AG04449 (cell line): ENCODE measurements at regions of chr18 and their contacts with region 1.

Region 1: DNA sequence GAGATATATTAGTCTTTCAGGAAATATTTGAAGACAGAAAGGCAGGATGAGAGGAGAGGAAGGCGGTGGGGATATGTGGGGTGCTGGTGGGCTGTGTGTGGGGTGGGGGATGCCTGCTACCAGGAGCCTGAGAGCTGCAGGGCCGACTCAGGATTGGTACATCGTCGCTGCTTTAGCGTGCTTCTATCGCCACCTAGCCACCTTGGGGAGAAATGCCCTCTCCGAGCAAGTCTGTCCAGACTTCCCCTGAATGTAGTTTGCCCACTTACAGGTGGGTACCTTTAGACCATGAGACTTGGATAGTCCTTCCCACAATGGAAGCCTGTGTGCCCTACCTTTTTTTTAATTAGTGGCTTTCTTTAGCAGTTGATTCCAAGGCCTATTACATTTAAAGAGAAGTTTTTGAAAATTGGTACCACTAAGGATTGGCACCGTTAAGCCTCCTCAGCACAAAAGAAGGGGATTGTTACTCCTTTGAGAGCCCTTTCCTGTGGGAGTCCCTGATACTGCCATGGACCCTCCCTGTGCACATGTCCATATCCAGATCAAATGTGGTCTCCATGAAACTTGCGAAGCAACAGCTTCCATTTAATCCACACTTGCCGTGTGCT is 114.1 kb upstream of the NDUFV2 start:
- DNase-seq: no peak
- H3K4me3 ChIP-seq: no peak overlapping the region
- CTCF ChIP-seq: peak; percentile 86

Region 2: DNA sequence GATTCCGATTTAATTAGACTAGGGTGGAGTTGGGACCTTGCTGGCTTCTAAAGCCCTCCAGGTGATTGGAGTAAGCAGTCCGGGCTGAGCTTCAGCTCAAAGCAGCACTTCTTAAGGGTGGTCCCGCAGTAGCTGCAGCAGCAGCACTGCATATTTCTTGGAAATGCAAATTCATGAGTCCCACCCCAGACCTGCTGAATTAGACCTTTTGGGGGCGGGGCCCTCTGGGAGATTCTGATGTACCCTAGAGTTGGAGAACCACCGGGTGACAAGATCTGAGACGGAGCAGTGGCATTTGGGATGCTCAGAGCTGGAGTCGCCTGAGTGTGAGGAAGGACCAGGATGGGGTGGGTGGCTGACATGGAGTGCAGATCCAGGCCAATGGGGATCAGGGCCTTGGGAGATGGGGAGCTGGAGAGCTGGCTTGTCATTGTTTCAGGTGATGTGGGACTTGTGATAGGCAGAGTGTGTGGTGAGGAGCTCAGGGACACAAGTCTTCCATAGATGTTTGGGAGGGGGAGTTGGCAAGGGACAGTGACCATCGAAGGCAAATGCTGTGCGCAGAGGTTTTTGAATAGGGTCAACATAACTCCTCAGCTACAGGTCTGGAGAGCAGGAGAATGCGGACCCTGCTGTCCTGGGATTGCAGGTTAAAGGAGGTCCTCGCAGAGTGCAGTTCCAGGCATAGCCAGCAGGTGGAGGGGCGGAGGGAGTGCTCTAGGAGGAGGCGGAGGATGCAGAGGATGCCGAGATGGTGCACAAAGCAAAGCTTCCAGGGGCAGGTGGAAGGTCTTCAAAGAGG is 510.0 kb before region 1 on chr18:
- CTCF ChIA-PET with region 1: interaction called, 16 read pairs
- POLR2A ChIA-PET with region 1: no interaction called
- DNase-seq: no peak
- H3K4me3 ChIP-seq: no peak overlapping the region
- CTCF ChIP-seq: peak; percentile 98

Region 3: DNA sequence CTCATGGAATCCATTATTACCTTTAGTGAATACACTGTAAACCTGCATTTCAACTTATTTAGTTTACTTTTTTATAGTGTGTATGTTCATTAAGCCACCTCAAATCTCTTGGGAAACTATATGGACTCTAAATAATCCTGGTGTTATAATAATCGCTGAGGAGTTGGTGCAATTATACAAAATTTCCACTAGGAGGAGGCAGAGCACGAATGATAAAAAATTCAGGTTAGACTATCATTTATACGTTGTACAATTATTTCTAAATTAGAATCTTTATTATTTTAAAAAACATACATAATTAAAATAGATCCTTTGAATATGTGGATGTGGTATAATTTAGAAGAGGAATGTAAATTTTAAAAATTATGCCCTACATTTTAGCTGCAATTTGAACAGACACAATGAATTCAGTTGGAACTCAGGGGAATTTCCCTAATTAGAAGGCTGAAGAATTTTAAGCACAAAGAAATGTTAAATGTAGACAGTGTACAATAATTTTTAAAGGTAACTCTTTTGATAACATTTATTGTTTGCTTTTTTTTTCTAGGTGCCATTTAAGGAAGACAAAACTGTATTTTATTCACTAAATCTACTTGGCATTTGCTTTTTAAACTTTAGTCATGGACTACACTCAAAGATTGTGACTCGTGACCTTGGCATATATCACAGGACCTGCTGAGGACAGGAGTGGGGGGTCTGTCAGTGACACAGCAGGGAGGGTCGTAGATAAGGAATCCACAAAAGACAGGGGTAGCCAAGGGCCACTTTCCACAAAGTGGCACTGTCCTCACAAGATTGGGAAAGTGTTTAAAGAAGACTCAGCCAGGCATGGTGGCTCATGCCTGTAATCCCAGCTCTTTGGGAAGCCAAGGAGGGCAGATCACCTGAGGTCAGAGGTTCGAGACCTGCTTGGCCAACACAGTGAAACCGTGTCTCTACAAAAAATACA is 333.6 kb before region 1 on chr18:
- CTCF ChIA-PET with region 1: interaction called, 121 read pairs
- POLR2A ChIA-PET with region 1: no interaction called
- DNase-seq: no peak
- H3K4me3 ChIP-seq: no peak overlapping the region
- CTCF ChIP-seq: peak; percentile 30

Region 4: GRCh38 chr18:8696749-8697211 is 291.6 kb before region 1 on chr18:
- CTCF ChIA-PET with region 1: interaction called, 133 read pairs
- POLR2A ChIA-PET with region 1: interaction called, 3 read pairs
- DNase-seq: no peak
- H3K4me3 ChIP-seq: no peak overlapping the region
- CTCF ChIP-seq: peak; percentile 88

Region 5: DNA sequence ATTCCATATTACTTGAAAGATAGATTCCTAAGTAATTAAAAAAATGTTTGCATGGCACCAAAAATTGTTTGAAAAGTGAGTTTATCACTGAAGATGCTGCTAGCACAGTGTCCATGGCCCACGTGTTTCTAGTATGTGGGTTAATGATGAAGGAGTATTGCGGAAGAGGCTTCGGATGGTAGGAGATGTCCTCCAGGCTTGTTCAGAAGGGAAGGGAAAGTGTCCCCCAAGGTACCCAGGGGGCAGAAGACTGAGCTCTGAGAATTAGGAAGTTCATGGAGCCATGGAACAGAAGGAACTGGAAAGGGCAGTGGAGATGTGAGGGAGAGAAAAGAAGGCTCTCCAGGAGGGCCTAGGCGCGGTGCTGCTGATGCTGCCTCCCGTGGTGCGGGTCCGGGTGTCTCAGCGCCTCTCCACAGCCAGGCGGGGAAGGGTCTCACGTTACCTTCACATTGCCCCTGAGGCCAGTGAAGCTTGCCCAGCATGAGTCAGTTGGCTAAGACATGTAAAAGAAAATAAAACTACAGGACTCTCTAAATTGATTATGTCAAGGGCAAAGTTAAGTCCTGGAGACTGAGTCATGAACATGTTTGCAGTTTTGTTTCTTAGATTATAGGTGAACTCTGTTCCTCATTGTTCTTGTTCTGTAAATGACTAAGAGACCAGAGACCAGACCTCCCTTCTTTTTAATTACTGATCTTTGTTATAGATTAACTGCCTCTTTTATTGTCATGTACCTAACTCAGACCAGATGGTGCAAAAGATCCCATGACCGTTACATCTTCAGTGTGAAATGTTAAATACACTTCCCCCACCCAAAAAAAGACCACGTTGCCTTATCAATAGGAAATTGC is 194.0 kb before region 1 on chr18:
- CTCF ChIA-PET with region 1: interaction called, 35 read pairs
- POLR2A ChIA-PET with region 1: no interaction called
- DNase-seq: no peak
- H3K4me3 ChIP-seq: no peak overlapping the region
- CTCF ChIP-seq: no peak

Region 6: DNA sequence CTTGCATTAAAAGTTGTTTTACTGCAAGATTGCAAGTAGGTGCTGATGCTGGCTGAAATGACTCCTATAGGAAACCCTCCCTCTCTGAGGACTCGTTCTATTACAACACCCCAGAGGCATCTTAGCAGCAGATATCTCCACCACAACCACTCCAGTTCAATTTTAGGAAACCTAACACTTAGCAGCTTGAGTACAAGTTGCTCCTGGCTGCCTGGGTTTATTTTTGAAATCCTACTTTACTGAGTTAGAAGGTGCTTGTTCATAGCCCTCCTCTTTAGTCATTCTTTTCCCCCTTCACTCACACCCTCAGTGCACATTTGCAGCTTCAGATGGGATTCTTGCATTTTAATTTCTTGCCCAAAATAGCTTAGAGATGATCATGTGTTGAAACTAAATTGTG is 171.6 kb before region 1 on chr18:
- CTCF ChIA-PET with region 1: interaction called, 13 read pairs
- POLR2A ChIA-PET with region 1: interaction called, 5 read pairs
- DNase-seq: no peak
- H3K4me3 ChIP-seq: no peak overlapping the region
- CTCF ChIP-seq: no peak

Region 7: GRCh38 chr18:8948471-8949149 is 39.8 kb before region 1 on chr18:
- CTCF ChIA-PET with region 1: interaction called, 11 read pairs
- POLR2A ChIA-PET with region 1: interaction called, 5 read pairs
- DNase-seq: no peak
- H3K4me3 ChIP-seq: peak overlapping the region; percentile 54
- CTCF ChIP-seq: peak; percentile 15

Region 8: DNA sequence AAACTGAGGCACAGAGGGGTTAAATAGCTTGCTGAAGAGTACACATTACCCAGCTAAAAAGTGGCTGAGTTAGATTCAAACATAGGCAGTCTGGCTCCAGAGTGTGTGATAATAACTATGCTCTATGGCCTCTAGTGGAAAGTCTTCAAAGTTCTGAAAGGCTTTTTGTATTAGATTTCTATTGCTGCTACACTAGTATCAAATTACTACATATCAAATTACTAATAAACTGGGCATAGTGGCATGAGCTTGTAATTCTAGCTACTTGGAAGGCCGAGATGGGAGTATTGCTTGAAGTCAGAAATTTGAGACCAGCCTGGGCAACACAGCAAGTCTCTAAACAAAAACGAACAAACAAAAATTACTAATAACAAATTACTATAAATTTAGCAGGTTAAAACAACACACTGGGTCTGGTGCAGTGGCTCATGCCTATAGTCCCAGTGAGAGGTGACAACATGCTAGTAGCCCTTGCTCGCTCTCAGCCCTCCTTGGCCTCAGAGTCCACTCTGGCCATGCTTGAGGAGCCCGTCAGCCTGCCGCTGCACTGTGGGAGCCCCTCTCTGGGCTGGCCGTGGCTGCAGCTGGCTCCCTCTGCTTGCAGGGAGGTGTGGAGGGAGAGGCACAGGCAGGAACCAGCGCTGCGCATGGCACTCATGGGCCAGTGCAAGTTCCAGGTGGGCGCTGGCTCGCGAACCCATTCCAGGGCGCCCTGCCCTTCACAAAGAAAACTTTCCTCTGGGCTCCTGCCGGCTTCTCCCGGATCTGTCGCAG is 308.1 kb after region 1 on chr18:
- CTCF ChIA-PET with region 1: no interaction called
- POLR2A ChIA-PET with region 1: no interaction called
- DNase-seq: no peak
- H3K4me3 ChIP-seq: no peak overlapping the region
- CTCF ChIP-seq: no peak